HEK293T (cell line): ENCODE measurements at regions of chr12 and their contacts with region 1.

Region 1: DNA sequence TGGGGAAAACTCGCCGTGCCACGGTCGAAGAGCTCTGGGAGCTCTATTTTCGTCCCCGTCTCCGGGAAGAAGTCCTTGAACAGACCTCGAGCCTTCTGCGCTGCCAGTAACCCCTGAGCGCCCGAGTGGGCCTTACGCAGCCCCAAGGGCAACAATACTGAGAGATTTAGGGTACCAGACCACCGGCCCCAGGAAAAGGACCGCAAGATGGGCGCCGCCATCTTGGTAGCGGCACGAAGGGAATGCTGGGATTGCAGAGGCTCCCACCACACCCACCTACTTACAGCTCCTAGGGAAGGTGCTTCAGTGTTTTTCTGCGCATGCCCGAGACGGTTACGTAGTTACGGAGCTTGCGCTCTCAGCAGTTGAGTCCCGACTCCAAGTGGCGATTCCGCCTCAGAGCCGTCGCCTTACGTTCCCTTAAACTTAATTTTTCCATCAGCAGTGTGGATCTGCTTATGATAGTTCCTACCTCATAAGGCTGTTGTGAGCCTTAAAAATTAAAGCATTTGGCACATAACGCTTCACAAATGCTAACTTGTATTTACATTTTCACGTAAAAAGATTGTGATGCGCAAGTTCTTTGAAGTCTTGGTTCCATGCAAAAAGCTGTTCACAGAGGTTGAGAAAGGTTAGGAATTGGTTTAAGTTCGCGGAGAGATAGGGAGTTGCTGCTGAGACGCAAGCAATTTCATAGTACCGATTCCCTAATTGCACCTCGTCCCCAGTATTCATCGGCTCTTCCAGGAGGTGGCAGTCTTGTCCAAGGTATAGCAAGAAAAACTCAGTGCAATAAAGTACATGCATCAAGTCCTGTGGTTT is at the start of gene YARS2:
- DNase-seq: peak; percentile 91

Region 2: GRCh38 chr12:32455607-32456071 is 300.2 kb before region 1 on chr12:
- CTCF ChIA-PET with region 1: interaction called, 12 read pairs
- POLR2A ChIA-PET with region 1: interaction called, 8 read pairs
- DNase-seq: peak; percentile 34

Region 3: GRCh38 chr12:32727237-32727636 is 28.6 kb before region 1 on chr12:
- CTCF ChIA-PET with region 1: no interaction called
- POLR2A ChIA-PET with region 1: no interaction called
- DNase-seq: no peak

Region 4: DNA sequence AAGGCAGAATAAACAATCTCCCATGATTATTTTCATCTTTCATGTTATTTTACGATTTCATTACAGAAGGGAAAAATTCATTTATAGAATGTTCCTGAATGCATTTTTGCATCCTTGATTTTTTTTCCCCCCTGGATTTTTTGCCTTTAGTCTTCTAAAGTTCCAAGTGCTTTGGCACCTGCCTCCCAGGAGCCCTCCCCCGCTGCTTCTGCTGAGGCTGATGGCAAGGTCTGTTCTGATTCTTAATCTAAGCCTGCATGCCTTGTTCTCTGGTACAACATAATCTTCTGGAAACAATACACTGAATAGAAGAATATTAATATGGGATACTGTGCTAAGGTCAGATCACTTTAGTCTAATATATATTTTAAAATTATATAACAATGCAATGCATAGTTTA is 18.1 kb before region 1 on chr12:
- CTCF ChIA-PET with region 1: no interaction called
- POLR2A ChIA-PET with region 1: no interaction called
- DNase-seq: no peak

Region 5: GRCh38 chr12:32896432-32897273 is 140.8 kb after region 1 on chr12 and contains the start of gene PKP2:
- CTCF ChIA-PET with region 1: interaction called, 12 read pairs
- POLR2A ChIA-PET with region 1: interaction called, 19 read pairs
- DNase-seq: peak; percentile 87

Region 6: GRCh38 chr12:32918890-32919801 is 163.3 kb after region 1 on chr12:
- CTCF ChIA-PET with region 1: interaction called, 15 read pairs
- POLR2A ChIA-PET with region 1: interaction called, 17 read pairs
- DNase-seq: peak; percentile 46

Region 7: DNA sequence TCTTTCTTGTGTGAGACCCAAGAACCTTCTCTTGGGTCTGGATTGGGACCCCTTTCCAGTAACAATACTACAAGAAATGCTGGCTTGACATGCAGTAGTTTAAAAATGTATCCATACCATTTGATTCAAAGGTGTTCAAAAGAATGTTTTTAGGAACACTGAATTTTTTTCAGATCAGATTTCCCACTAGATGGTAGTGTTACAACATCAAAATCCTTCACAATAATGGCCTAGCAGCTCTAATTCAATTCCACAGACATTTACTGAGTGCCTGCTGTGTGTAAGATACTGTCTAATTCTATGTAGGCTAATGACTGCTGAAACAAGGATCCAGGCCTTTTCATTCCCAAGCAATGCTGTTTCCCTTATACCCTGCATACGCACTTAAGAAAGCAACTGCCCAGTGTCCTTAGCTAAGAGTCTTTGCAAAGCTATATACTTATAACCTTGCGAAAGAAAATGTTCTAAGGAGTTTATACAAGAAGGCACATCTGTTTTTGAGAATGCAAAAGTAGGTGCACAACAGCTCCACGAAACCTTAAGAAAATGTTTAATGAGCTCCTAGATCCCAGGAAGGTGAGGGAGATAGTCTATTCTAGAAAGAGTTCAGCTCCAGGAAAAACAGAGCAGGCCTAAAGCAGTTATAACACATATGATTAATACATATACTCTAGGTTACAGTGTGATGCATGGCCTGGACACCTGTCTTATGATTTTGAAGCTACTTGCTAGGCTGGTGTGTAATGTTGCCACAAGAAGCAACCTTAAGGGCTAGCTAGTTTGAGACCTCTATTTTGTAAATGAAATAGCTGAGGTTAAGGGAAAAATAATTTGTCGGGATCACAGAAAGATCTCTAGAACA is 191.6 kb after region 1 on chr12:
- CTCF ChIA-PET with region 1: interaction called, 8 read pairs
- POLR2A ChIA-PET with region 1: interaction called, 11 read pairs
- DNase-seq: peak; percentile 19

Region 8: GRCh38 chr12:34022079-34022830 is 1266.4 kb after region 1 on chr12 and contains the start of gene ALG10:
- CTCF ChIA-PET with region 1: interaction called, 3 read pairs
- POLR2A ChIA-PET with region 1: interaction called, 15 read pairs
- DNase-seq: peak; percentile 74